OCI-LY7 (cell line): ENCODE measurements at regions of chr7 and their contacts with region 1.

Region 1: DNA sequence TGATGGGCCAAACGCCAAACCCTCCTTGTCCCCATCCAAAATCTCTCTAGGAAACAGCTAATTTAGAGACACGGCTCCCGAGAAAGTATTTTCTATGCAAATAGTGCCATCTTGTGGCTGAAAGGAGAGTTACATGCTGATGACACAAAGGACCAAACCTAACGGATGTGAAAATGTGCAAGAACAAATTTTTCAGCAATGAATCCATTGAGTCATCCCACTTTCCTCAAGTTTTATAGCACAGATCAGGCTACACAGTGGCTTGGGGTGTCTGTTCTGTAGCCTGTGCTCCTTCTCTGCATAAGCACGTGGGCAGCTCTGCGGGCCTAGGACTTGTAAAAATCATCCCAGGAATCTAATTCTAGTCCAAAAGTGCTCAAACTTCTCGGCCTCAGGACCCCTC is 154.8 kb upstream of the PRR15 start:
- DNase-seq: peak; percentile 64
- H3K4me3 ChIP-seq: no peak overlapping the region
- H3K27ac ChIP-seq: no peak overlapping the region
- H3K4me1 ChIP-seq: no peaks in the 10 kb centered on the region
- CTCF ChIP-seq: peak; percentile 93

Region 2: DNA sequence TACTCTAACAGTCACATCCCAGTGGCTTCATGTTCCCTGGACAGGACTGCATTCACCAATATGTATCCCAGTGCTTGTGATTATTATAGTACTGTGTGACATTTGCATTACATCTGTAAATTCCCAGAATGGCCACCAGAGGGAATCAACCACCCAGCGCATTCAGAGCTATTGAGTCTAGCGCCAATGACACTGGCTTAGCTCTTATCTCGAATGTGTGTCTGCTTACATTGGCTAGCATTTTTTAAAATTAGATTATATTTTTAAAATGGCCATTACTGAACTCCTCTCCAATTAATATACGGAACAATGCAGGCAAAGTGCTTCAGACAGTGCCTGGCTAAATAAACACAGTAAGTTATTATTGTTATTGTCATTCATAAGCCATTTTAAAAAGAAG is 487.0 kb before region 1 on chr7:
- CTCF ChIA-PET with region 1: no interaction called
- POLR2A ChIA-PET with region 1: no interaction called
- intact Hi-C with region 1: loop called (anchors 1 kb)
- DNase-seq: peak; percentile 55
- H3K4me3 ChIP-seq: no peak overlapping the region
- H3K27ac ChIP-seq: no peak overlapping the region
- H3K4me1 ChIP-seq: no peaks in the 10 kb centered on the region
- CTCF ChIP-seq: peak; percentile 84

Region 3: DNA sequence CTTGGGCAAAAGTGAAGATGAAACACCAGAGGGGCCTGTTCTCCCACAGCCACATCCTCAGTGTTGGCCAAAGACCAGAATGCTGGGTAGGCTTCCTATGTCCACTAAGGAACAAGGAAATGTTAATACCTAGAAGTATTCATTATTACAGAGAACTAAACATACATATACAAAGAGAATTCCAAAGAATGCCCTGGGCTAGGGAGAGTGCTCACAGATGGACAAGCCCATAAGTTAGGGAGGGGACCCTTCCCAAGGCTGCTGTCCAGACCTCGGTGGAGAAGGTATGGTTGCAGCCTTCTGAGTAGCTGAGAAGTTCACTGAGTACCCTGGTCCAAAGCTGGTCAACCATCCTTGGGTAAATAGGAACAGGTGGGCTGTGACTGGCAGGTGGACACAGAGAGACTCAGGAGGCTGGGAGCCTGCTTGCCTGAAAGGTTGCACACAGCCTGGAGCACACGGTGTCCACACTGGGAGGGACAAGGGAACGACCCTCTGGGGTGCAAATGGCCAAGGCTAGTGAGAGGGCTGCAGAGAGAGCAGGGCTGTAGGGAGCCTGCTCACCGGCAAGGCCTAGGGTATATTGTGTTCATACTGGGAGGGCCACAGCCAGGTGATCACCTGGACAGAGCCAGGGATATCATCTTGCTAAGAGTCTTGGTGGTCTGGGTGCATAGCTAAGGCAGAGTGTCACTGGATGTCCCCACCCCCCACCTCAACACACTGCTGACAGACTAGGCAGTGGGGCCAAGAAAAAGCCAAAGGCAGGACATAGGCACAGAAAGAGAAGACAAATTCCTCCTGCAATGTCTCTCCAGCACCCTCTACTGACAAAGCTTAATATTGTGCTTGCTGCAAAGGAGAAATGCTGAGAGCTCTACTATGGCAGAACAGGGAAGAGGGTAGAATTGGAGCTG is 302.8 kb before region 1 on chr7:
- CTCF ChIA-PET with region 1: no interaction called
- POLR2A ChIA-PET with region 1: no interaction called
- intact Hi-C with region 1: loop called (anchors 5 kb)
- DNase-seq: peak; percentile 32
- H3K4me3 ChIP-seq: no peak overlapping the region
- H3K27ac ChIP-seq: no peak overlapping the region
- H3K4me1 ChIP-seq: no peaks in the 10 kb centered on the region
- CTCF ChIP-seq: peak; percentile 77

Region 4: GRCh38 chr7:29189743-29190201 is 219.1 kb before region 1 on chr7:
- CTCF ChIA-PET with region 1: no interaction called
- POLR2A ChIA-PET with region 1: no interaction called
- intact Hi-C with region 1: loop called (anchors 5 kb)
- DNase-seq: peak; percentile 22
- H3K4me3 ChIP-seq: no peak overlapping the region
- H3K27ac ChIP-seq: no peak overlapping the region
- H3K4me1 ChIP-seq: no peaks in the 10 kb centered on the region
- CTCF ChIP-seq: peak; percentile 71

Region 5: DNA sequence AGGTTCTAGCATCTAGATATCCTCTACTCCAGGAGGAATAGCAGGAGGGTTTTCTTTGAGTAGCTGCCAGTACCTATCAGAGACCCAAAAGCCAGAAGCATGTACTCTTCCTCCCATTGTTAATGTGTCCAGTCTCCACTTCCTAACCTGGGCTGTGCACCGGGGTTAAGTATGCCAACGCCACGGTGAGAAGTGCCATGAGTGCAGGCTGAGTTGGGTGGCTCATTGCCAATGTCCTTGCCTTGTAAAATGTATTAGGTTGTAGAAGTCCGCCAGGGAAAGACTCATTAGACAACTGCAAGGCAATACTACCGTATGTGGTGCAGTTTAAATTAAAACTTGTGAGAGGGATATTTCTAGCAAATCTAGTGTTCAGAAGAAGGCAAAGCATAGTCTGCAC is 99.8 kb after region 1 on chr7:
- CTCF ChIA-PET with region 1: no interaction called
- POLR2A ChIA-PET with region 1: no interaction called
- intact Hi-C with region 1: no loop called
- DNase-seq: no peak
- H3K4me3 ChIP-seq: no peak overlapping the region
- H3K27ac ChIP-seq: no peak overlapping the region
- H3K4me1 ChIP-seq: no peaks in the 10 kb centered on the region
- CTCF ChIP-seq: no peak